MCF 10A (cell line): ENCODE measurements at regions of chr1 and their contacts with region 1.

Region 1: DNA sequence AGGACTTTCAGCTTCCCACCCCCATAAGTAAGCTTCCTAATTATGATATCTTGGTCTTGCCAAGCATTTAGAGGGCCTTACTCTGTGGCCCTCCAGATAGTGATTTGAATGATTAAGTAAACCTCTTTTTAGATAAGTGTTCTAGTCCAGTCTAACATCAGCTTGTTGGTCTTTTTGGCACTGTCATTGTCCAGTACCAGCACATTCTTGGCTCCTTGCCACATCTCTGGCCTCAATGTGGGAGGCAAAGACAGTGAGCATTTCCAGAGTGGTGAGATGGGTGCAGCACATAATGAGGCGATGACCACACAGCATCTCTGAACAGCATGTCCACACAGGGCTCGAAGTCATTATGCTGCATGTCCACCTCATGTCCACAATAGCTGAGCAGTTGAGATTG is 6.1 kb downstream of the CAPZA1 start:
- DNase-seq: peak; percentile 26
- H3K4me3 Mint-ChIP-seq: no peak overlapping the region
- H3K27ac Mint-ChIP-seq: no peak overlapping the region
- H3K4me1 Mint-ChIP-seq: peaks cover 38% of the 10 kb centered on the region
- H3K27me3 Mint-ChIP-seq: no peaks in the 10 kb centered on the region
- CTCF ChIP-seq: no peak

Region 2: GRCh38 chr1:112637254-112638116 is 11.8 kb after region 1 on chr1:
- CTCF ChIA-PET with region 1: interaction called, 3 read pairs
- POLR2A ChIA-PET with region 1: interaction called, 71 read pairs
- intact Hi-C with region 1: no loop called
- DNase-seq: no peak
- H3K4me3 Mint-ChIP-seq: no peak overlapping the region
- H3K27ac Mint-ChIP-seq: peak overlapping the region; percentile 46
- H3K4me1 Mint-ChIP-seq: peaks cover 32% of the 10 kb centered on the region
- H3K27me3 Mint-ChIP-seq: no peaks in the 10 kb centered on the region
- CTCF ChIP-seq: no peak